Lower lobe of right lung (tissue), 2 donors: ENCODE measurements at regions of chr1 and their contacts with region 1.

Region 1: DNA sequence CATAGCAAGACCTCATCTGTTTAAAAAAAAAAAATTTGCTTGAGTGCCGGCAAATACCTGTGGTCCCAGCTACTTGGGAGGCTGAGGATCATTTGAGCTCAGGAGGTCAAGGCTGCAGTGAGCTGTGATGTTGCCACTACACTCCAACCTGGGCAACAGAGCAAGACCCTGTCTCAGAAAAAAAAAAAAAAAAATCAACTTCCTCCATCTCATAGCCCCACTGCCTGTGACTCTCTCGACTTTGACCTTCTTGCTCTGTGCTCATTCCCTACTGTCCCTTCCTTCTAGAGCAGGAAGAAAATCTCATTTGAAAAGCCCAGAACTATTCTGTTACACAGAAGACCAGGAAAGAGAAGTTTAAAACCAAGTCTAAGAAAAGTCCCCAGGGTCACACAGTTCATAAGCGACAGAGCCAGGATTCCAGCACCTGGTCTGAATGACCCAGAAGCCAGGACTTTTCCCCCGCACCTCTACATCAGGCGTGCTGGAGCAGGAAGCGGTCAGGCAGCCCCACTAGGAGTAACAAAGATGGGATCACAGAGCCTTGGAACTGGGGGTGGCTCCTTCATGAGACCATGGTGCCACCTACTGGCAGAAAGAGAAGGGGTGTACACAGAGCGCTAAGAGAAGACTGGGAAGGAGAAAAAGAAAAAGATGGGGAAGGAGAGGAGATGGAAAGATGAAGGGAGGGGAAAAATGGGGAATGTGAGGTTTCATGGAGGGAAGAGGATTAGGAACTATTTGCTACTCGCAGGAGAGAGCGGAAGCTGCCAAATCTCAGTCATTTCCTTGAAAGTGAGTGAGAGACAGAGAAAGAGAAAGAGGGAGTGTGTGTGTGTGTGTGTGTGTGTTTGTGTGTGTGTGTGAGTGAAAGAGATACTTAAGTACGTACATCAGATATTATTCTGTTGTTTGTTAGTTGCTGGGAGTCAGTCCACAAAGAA is 3.1 kb upstream of the P3R3URF start:
- DNase-seq: peak; percentile 69
- ATAC-seq: peak; percentile 87 to 88
- H3K4me3 ChIP-seq: no peak overlapping the region
- H3K27ac ChIP-seq: no peak overlapping the region
- H3K4me1 ChIP-seq: peaks cover 48% of the 10 kb centered on the region
- H3K27me3 ChIP-seq: no peaks in the 10 kb centered on the region
- CTCF ChIP-seq: peak; percentile 88

Region 2: DNA sequence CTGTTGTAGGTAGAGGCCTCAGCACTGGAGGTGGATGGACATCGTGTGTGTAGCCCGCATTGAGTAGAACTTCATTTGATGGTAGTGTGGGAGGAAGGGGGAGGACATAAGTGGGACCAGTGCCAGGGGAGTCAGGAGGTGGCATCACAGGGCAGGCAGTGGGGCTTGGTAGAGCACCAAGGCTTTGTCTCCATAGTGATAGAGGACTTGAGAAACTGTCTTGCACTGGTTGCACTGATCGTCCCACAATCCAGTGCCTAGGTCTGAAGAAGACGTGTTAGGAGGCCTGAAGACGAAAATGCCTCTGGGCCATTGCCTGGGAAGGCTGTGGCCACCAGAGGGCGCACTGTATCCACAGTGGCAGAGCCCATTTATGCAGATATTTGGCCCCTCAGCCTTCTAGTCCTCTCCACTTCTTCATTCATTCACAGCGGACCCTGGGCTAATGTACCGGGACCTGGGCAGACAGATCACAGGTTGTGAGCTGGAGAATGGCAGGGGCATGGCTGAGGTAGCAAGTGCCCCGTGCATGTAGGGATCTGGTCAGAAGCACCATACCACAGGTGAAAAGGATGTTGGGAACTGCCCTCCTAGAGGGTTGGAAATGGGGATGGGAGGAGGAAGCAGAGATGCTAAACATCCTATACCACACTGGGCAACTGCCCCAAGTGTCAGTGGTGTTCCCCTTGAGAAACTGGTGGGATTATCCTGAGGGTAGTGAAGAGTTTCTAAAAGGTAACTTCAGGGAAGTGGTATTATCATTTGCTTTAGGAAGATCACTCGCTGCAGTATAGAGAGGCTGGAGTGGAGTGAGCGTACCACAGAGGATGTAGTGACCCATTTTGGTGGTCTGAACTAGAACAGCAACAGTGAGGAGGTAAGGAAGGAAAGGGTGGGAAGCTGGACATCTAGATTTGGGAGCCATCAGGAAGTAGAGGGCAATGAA is 142.2 kb before region 1 on chr1:
- intact Hi-C with region 1: loop called (anchors 5 kb)
- DNase-seq: peak; percentile 87
- ATAC-seq: peak; percentile 84 to 86
- H3K4me3 ChIP-seq: no peak overlapping the region
- H3K27ac ChIP-seq: no peak overlapping the region
- H3K4me1 ChIP-seq: peaks cover 24% of the 10 kb centered on the region
- H3K27me3 ChIP-seq: no peaks in the 10 kb centered on the region
- CTCF ChIP-seq: peak; percentile 99

Region 3: DNA sequence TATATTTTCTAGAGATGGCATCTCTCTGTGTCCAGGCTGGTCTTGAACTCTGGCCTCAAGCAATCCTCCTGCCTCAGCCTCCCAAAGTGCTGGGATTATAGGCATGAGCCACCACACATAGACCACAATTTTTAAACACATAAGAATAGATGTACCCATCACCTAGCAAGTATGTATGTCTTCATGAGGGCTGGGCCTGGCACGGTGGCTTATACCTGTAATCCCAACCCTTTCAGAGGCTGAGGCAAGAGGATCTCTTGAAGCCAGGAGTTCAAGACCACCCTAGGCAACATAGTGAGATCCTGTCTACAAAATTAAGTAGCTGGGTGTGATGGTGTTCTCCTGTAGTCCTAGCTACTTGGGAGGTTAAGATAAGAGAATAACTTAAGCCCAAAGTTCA is 137.9 kb after region 1 on chr1:
- intact Hi-C with region 1: no loop called
- DNase-seq: no peak
- ATAC-seq: no peak
- H3K4me3 ChIP-seq: no peak overlapping the region
- H3K27ac ChIP-seq: no peak overlapping the region
- H3K4me1 ChIP-seq: no peaks in the 10 kb centered on the region
- H3K27me3 ChIP-seq: no peaks in the 10 kb centered on the region
- CTCF ChIP-seq: no peak